MCF 10A (cell line): ENCODE measurements at regions of chr3 and their contacts with region 1.

Region 1: DNA sequence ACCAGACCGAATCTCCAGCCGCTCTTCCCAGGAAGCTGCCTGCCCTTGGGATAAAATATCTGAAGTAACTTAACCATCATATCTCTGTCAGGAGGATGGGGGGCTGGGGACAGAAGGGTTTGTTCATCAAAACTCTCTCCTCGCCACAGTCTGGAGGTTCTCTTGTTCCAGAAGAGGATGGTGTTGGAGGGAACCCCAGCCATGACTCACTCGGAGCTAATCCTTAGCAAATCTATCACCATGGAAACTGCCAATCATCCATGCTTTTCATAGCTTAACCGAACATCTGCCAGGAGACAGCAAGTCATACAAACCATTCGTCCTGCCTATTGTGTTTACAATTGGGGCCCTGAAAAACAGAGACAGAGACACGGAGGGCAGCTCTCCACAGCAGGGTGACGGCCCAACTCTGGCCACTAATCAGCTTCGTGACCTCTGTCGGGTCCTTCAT is 73.7 kb upstream of the HEG1 start:
- DNase-seq: peak; percentile 97
- H3K4me3 Mint-ChIP-seq: no peak overlapping the region
- H3K27ac Mint-ChIP-seq: peak overlapping the region; percentile 92
- H3K4me1 Mint-ChIP-seq: peaks cover 36% of the 10 kb centered on the region
- H3K27me3 Mint-ChIP-seq: no peaks in the 10 kb centered on the region
- CTCF ChIP-seq: no peak

Region 2: DNA sequence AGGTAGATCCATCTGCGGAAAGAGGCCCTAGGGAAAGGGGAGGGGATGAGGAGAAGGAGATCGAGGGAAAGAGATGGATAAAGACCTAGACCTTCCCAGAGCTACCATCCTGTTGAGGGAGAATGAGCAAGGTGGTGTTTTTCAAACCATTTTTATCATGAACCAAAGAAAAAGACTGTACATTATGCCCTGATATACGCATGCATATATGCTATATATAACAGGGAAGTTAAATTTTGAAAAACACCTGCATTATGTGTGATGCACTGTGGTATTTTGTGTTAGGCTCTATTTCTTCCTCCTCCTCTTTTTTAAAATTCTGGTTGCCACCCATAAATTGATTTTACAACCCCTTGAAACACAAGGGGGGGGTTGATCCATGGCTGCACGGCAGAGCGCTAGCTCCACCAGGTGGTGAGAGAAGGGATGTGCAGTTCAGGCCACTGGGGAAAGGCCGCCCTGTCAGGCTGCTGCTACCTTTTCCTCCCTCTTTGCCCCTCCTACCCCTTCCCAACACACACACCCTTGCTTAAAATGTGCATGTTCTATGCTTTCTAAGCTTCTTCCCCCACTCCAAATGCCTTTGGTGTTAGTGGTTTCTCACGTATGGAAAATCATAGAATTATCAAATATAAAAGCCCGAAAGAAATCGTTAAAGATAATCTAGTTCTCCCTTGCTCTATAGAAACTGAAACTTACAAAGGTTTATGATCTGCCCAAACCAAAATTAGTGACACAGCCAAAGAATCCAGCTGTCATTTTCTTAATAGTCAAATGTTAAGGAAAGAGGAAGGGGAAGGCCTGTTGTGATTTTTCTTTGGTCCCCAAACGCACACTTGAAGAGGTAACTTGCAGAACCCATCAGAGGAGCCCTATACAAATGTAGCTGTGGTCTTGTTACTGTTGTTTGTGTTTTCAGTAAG is 661.3 kb before region 1 on chr3:
- CTCF ChIA-PET with region 1: no interaction called
- POLR2A ChIA-PET with region 1: no interaction called
- intact Hi-C with region 1: no loop called
- DNase-seq: peak; percentile 62
- H3K4me3 Mint-ChIP-seq: no peak overlapping the region
- H3K27ac Mint-ChIP-seq: no peak overlapping the region
- H3K4me1 Mint-ChIP-seq: no peaks in the 10 kb centered on the region
- H3K27me3 Mint-ChIP-seq: peaks cover 90% of the 10 kb centered on the region
- CTCF ChIP-seq: peak; percentile 99

Region 3: DNA sequence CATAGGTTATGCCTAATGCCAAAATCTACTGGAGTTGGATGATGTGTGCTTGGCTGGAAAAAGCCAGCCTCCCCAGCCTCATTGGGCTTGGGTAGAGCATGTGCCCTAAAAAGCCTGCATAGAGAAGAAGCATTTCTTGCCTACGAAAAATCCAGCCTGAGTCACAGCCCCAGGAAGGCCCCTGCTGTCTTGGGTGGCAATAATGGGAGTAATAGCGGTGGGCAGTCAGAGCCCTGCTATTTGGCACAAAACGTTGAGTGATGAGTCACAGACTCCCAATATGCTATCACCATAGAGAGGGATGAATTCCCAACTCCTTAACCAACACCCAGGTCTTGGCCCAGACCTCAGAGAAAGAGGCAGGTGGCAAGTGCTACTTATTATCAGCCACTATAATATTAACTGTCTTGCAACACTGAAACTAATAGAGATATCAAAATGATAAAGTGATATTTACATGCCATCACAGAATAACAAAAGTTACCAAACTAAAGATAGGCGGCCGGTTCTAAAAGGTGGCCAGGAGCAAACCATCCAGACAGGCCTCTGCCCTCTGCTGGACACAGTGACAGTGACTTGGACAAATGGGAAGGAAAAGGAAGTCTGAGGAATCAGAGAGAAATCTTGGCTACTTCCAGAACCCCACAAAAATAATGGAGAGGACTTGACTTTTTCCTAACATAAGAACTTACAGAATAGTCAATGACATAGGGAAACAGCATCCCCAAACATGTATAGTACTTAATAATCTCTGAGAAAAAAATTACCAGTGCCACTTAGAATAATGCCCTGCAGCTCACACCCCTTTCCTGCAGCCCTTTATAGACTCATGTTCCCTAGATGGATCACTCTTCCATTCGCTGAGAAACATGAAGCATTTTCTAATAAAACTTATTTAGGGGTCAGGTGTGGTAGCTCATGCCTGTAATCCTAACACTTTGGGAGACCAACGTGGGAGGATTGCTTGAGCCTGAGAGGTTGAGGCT is 143.1 kb before region 1 on chr3:
- CTCF ChIA-PET with region 1: no interaction called
- POLR2A ChIA-PET with region 1: no interaction called
- intact Hi-C with region 1: no loop called
- DNase-seq: peak; percentile 92
- H3K4me3 Mint-ChIP-seq: no peak overlapping the region
- H3K27ac Mint-ChIP-seq: peak overlapping the region; percentile 95
- H3K4me1 Mint-ChIP-seq: peaks cover 23% of the 10 kb centered on the region
- H3K27me3 Mint-ChIP-seq: no peaks in the 10 kb centered on the region
- CTCF ChIP-seq: peak; percentile 36

Region 4: DNA sequence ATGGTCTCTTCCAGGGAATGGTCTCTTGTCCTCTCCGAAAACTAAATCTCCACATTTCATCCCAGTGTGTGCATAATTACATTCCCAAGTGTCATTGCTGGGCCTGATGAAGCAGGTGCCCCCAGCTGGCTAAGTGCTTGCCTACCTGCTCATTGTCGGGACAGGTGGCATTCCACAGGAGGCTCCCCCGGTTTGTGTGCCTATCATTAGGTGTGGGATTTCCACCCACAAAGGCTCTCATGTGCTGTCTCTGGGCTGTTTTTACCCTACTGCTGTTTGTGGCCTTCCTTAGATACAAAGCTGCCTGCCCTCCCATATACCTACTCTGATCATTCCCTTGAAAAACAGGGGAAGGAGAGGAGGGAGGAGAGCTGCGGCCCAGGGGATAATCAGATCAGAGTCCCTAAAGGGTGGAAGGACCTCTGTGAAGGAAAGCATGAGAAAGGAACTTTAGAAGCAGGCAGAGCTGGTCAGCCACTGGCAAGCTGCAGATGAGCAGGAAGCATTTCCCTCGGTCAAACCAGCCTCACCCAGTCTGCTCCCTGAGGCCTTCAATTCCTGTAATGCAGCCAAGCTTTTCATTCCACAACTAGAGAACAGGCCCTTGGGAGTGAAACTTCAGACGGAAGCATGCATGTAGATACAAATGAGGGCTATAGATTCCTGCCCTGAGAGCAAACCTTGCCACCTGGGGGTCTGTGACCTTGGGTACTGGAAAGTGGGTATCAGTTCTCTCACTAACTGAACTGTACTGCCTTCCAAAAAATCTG is 13.0 kb before region 1 on chr3:
- CTCF ChIA-PET with region 1: interaction called, 4 read pairs
- POLR2A ChIA-PET with region 1: interaction called, 17 read pairs
- intact Hi-C with region 1: no loop called
- DNase-seq: peak; percentile 87
- H3K4me3 Mint-ChIP-seq: no peak overlapping the region
- H3K27ac Mint-ChIP-seq: peak overlapping the region; percentile 87
- H3K4me1 Mint-ChIP-seq: peaks cover 26% of the 10 kb centered on the region
- H3K27me3 Mint-ChIP-seq: no peaks in the 10 kb centered on the region
- CTCF ChIP-seq: no peak

Region 5: GRCh38 chr3:125202197-125202596 is 72.7 kb after region 1 on chr3:
- CTCF ChIA-PET with region 1: no interaction called
- POLR2A ChIA-PET with region 1: no interaction called
- intact Hi-C with region 1: no loop called
- DNase-seq: peak; percentile 33
- H3K4me3 Mint-ChIP-seq: no peak overlapping the region
- H3K27ac Mint-ChIP-seq: no peak overlapping the region
- H3K4me1 Mint-ChIP-seq: no peaks in the 10 kb centered on the region
- H3K27me3 Mint-ChIP-seq: no peaks in the 10 kb centered on the region
- CTCF ChIP-seq: no peak